PC-3 (cell line): ENCODE measurements at regions of chr13 and their contacts with region 1.

Region 1: DNA sequence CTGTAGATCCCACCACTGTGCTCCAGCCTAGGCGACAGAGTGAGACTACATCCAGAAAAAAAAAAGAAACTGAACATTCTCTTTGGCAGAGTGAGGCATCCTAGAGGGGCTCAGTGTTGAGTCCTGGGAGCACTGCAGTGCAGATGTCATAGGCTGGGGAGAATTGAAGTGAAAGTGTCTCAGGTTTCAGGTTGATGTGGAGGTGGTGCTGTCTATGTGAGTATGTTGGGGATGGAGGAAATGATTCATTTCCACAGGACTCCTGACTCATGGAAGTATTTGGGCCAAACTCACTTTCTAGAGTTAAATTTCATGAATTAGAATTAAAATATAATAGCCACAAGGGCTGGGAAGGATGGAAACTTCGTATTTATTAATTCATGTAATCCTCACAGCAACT is 134.4 kb upstream of the TSC22D1 start:
- DNase-seq: peak; percentile 89
- ATAC-seq: peak; percentile 81
- H3K4me3 ChIP-seq: no peak overlapping the region
- H3K27ac ChIP-seq: peak overlapping the region; percentile 98
- H3K4me1 ChIP-seq: peaks cover 40% of the 10 kb centered on the region
- H3K27me3 ChIP-seq: no peaks in the 10 kb centered on the region
- CTCF ChIP-seq: no peak

Region 2: GRCh38 chr13:44484562-44485138 is 225.9 kb before region 1 on chr13:
- CTCF ChIA-PET with region 1: no interaction called
- POLR2A ChIA-PET with region 1: no interaction called
- intact Hi-C with region 1: loop called (anchors 10 kb)
- DNase-seq: no peak
- ATAC-seq: no peak
- H3K4me3 ChIP-seq: no peak overlapping the region
- H3K27ac ChIP-seq: no peak overlapping the region
- H3K4me1 ChIP-seq: peaks cover 6% of the 10 kb centered on the region; the same call in 1 of the 2 replicates
- H3K27me3 ChIP-seq: no peaks in the 10 kb centered on the region
- CTCF ChIP-seq: no peak

Region 3: DNA sequence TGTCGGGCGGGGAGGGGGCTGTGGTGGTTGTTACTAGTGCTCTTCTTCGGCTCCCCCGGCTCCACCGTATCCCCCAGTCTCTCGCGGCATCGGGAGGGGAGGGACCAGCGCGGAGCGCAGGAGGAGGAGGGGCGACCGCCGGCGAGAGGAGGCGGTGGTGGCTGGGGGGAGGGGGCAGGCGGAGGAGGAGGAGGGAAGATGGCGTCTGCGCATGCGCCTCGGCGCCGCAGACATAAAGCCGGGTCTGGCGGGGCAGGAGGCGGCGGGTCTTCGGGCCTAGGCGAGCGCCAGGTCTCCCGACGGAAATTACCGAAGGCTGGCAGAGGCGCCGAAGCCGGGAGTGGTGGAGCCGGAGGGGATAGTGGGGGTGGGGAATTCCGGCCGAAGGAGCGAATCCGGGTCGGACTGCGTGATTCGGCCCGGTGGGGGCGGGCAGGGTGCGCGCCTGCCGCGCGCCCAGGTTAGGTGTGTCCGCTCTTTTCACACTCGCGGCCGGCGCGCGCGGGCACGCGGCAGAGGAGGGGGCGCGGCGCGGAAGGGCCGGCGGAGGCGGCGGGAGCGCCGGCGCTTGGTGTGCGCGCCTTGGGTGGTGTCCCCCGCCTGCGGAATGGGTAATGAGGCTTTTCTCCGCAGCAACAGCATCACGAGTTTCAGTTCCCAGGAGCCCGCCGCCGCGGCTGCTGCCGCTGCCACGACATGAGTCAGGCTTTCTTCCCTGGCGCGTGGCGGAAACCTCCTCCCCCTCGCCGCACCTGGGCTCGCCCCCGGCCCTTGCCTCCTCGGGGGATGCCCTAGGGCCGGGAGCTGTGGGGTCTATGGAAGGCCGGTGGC is 133.1 kb before region 1 on chr13:
- CTCF ChIA-PET with region 1: no interaction called
- POLR2A ChIA-PET with region 1: no interaction called
- intact Hi-C with region 1: loop called (anchors 2 kb)
- DNase-seq: peak; percentile 93
- ATAC-seq: peak; percentile 68
- H3K4me3 ChIP-seq: peak overlapping the region; percentile 84
- H3K27ac ChIP-seq: peak overlapping the region; percentile 80
- H3K4me1 ChIP-seq: peaks cover 36% of the 10 kb centered on the region
- H3K27me3 ChIP-seq: no peaks in the 10 kb centered on the region
- CTCF ChIP-seq: no peak

Region 4: DNA sequence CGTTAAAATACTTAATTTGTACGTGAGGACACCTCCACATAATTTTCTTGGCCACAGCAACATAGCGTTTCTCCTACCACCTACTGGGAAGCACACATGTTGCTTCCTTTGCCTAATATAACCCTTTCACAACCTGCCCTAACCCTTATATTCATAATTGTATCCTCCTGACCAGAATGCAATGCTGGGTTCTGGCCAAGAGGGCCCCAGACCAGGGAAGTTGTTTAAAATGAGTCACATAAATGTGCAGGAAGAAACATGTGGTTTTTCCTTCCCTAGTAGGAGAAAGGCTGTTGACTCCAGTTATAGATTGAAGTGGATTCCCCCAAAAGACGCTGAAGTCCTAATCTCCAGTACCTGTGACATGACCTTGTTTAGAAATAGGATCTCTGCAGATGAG is 91.4 kb after region 1 on chr13:
- CTCF ChIA-PET with region 1: no interaction called
- POLR2A ChIA-PET with region 1: no interaction called
- intact Hi-C with region 1: loop called (anchors 5 kb)
- DNase-seq: peak; percentile 76
- ATAC-seq: peak; percentile 93
- H3K4me3 ChIP-seq: no peak overlapping the region
- H3K27ac ChIP-seq: peak overlapping the region; percentile 48
- H3K4me1 ChIP-seq: peaks cover 18% of the 10 kb centered on the region
- H3K27me3 ChIP-seq: no peaks in the 10 kb centered on the region
- CTCF ChIP-seq: no peak

Region 5: DNA sequence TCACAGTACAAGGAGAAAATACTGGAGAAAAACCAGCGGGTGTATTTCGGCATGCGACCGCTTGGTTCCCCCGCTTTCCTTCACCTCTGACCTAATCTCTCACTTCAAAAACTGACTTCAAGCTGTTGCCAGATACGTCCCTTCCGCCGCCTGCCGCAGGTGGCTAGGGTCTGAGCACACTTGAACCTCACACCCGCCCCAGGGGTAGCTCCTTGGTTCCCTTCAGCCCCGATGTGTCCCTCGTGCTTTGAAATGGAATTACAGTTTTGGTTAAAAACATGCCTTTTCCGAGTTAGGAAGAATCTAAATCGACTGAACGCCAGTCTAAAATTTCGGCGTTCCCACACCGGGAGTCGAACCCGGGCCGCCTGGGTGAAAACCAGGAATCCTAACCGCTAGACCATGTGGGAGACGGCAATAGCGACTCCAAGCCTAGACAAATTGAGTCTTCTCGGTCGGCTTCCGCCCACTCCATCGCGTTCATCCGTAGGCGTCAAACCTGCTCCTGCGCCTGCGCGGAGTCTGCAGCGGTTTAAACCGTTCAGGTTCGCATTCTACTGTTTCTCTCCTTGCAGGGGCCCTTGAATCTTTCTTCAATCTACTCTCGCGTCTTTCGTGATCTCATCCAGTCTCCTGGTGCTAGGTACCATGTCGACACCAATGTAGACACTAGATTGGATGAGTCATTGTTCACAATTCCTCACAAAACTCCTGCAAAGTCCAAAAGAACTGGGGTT is 207.2 kb after region 1 on chr13:
- CTCF ChIA-PET with region 1: no interaction called
- POLR2A ChIA-PET with region 1: no interaction called
- intact Hi-C with region 1: loop called (anchors 1 kb)
- DNase-seq: peak; percentile 92
- ATAC-seq: peak; percentile 52
- H3K4me3 ChIP-seq: peak overlapping the region; percentile 71
- H3K27ac ChIP-seq: peak overlapping the region; percentile 94
- H3K4me1 ChIP-seq: peaks cover 28% of the 10 kb centered on the region
- H3K27me3 ChIP-seq: no peaks in the 10 kb centered on the region
- CTCF ChIP-seq: no peak